ENCODE measurements at regions of chr3 and their contacts with region 1.

Region 1: DNA sequence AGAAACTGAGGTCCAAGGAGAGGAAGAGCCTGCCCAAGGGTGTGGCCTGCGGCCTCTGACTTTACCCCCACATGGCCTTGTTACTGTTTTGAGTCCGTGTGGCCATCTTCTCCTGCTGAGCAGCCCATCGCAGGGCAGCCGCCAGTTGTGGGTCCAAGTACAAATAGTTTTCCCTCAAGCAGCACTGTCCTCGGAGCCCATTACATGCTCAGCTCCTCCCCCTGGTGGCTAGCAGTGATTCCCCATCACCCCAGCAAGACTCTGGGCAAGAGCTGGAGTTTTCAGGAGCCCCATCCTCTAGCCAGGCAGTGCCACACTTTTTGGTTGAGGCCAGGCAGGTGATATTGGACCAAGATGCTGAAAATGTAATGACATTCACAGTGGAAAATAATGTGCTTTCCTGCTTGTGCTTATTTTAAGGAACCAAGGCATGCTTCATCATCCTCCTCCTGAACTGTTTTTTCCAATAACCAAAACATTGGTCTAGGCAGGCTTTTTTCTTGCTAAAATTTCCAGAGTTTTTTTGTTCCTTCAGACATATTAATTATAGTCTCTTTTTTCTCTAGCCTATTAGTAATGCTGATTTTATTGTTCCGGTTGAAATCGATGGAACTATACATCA is 23.2 kb upstream of the VILL start:
- DNase-seq: peak; percentile 65 to 82 (median 76)
- H3K4me3 ChIP-seq: no peak overlapping the region
- H3K27ac ChIP-seq: no peak overlapping the region
- H3K4me1 ChIP-seq: peaks cover 0 to 15% (median 4%) of the 10 kb centered on the region in 4 experiments
- H3K27me3 ChIP-seq: no peaks in the 10 kb centered on the region

Region 2: DNA sequence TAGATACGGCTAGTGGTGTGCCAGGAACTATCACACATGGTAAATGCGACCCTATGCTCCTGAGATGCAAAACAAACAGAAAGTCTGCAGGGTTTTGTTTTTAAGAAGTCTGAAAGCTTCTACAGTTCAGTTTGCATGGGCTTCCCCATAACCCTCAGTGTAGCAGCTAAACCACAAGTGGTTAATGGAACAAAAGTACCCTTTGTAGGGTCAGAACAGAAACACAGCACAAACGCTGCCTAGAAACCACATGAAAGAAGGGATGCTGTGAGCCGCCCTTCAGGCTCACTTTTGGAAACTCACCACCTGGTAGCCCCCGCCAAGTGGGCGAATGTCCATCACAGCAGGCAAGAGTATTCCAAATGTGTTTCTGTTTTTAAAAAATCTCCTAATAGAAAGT is 59.5 kb before region 1 on chr3:
- CTCF ChIA-PET with region 1: interaction called, 102 read pairs
- POLR2A ChIA-PET with region 1: no interaction called
- DNase-seq: peak in 2 of 3 donors; percentile 54 to 55
- H3K4me3 ChIP-seq: peak overlapping the region in 3 of 7 experiments; percentile 20 to 46 (median 40)
- H3K27ac ChIP-seq: peak overlapping the region in 1 of 2 experiments; percentile 39
- H3K4me1 ChIP-seq: peaks cover 19 to 95% (median 70%) of the 10 kb centered on the region in 4 experiments
- H3K27me3 ChIP-seq: no peaks in the 10 kb centered on the region

Region 3: DNA sequence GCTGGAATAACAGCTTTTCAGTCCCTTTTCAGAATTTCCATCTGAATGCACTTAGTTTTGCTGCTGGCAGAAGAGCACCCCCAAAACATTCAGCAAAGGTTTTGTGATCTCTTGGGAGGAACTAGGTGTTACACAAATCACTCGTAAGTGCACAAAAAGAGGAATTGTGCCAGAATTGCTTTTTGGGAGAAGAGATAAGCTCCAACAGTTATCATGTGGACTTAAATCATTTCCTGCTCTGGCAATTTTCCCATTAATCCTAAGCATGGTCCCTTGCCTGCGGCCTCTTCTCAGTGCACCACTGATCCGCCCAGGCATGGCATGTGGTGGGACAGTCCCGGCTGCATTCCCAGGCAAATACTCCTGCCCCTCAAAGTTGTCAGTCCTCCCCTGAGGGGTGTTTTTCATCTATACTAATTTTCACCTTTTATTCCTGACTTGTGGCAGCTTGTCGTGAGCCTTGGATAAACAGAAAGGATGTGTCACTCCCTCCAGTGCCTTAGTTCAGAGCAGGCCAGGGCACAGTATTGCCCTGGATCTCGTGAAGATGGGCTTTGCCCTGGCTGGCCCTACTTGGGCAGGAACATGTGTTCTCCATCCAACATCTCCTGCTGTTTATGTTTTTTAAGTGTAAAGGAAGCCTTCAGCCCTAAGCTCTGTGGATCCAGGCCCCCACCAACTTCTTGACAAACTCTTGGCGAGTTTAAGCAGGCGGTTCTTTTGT is 21.4 kb before region 1 on chr3:
- CTCF ChIA-PET with region 1: interaction called, 12 read pairs
- POLR2A ChIA-PET with region 1: interaction called, 4 read pairs
- DNase-seq: peak in 2 of 3 donors; percentile 47 to 54
- H3K4me3 ChIP-seq: peak overlapping the region in 2 of 7 experiments; percentile 11 to 66
- H3K27ac ChIP-seq: peak overlapping the region in 1 of 2 experiments; percentile 1
- H3K4me1 ChIP-seq: peaks cover 6 to 37% (median 24%) of the 10 kb centered on the region in 4 experiments
- H3K27me3 ChIP-seq: no peaks in the 10 kb centered on the region

Region 4: GRCh38 chr3:37979541-37980461 is 12.4 kb after region 1 on chr3:
- CTCF ChIA-PET with region 1: interaction called, 73 read pairs
- POLR2A ChIA-PET with region 1: interaction called, 4 read pairs
- DNase-seq: no peak
- H3K4me3 ChIP-seq: no peak overlapping the region
- H3K27ac ChIP-seq: no peak overlapping the region
- H3K4me1 ChIP-seq: peaks cover 0 to 1% (median 0%) of the 10 kb centered on the region in 4 experiments
- H3K27me3 ChIP-seq: no peaks in the 10 kb centered on the region

Region 5: GRCh38 chr3:38083871-38084333 is 116.5 kb after region 1 on chr3:
- CTCF ChIA-PET with region 1: no interaction called
- POLR2A ChIA-PET with region 1: no interaction called
- DNase-seq: peak in 2 of 3 donors; percentile 58 to 77
- H3K4me3 ChIP-seq: no peak overlapping the region
- H3K27ac ChIP-seq: no peak overlapping the region
- H3K4me1 ChIP-seq: no peaks in the 10 kb centered on the region
- H3K27me3 ChIP-seq: no peaks in the 10 kb centered on the region